PC-3 (cell line): ENCODE measurements at regions of chr6 and their contacts with region 1.

Region 1: DNA sequence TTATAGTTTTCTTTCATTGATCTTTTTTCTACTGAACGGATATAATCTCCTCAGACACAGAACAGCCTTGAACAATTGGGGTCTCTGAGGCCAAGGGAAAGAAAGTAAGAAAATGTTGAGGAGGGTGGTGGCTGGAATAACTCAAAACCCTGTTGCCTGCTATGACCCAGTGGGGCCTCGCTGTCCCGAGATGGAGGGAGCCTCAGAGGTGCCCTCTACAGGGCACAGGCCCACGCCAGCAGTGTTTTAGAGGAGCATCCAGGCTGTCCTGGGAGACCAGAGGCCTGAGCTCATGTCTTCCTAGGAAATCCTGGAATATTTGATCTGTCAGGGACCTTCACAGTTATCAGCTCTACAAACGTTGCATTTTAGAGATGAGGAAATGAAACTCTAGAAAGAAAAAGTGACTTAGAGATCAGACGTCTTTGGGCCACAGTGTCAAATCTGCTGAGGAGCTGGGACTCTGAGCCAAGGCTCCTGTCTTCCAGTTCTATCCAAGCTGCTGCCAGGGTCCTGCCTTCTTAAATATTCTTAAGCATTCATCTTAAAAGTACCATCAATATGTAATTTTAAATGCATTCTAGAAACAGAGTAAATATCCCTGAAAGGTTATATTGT is 26.3 kb downstream of the ALDH5A1 start:
- DNase-seq: peak; percentile 67
- ATAC-seq: peak; percentile 97
- H3K4me3 ChIP-seq: no peak overlapping the region
- H3K27ac ChIP-seq: no peak overlapping the region
- H3K4me1 ChIP-seq: no peaks in the 10 kb centered on the region
- H3K27me3 ChIP-seq: no peaks in the 10 kb centered on the region
- CTCF ChIP-seq: peak; percentile 93

Region 2: GRCh38 chr6:24283043-24283985 is 237.7 kb before region 1 on chr6:
- CTCF ChIA-PET with region 1: no interaction called
- POLR2A ChIA-PET with region 1: no interaction called
- intact Hi-C with region 1: loop called (anchors 10 kb)
- DNase-seq: peak; percentile 84
- ATAC-seq: peak; percentile 99
- H3K4me3 ChIP-seq: peak overlapping the region; percentile 53
- H3K27ac ChIP-seq: no peak overlapping the region
- H3K4me1 ChIP-seq: peaks cover 7% of the 10 kb centered on the region
- H3K27me3 ChIP-seq: peaks cover 22% of the 10 kb centered on the region
- CTCF ChIP-seq: peak; percentile 97

Region 3: DNA sequence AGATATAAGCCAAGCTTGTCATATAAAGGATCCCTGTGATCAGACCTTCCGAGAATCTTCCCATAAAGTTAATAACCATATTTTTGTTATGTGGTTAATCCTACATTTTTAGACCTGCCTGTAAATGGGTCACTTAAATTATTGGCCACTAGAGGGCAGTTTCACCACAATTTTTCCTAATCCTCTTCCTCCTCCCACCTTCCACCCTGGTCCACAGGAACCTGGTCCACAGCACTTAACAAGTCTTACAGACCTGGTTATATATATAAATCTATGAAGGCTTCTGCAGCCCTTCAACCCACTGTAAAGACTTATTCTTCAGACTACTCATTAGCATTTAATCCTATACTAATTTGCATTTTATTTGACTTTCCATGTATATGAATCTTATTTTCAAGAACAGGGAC is 90.0 kb before region 1 on chr6:
- CTCF ChIA-PET with region 1: interaction called, 4 read pairs
- POLR2A ChIA-PET with region 1: no interaction called
- intact Hi-C with region 1: loop called (anchors 1 kb)
- DNase-seq: peak; percentile 74
- ATAC-seq: peak; percentile 27; the same call in 1 of the 2 replicates
- H3K4me3 ChIP-seq: no peak overlapping the region
- H3K27ac ChIP-seq: no peak overlapping the region
- H3K4me1 ChIP-seq: peaks cover 37% of the 10 kb centered on the region
- H3K27me3 ChIP-seq: no peaks in the 10 kb centered on the region
- CTCF ChIP-seq: peak; percentile 89

Region 4: DNA sequence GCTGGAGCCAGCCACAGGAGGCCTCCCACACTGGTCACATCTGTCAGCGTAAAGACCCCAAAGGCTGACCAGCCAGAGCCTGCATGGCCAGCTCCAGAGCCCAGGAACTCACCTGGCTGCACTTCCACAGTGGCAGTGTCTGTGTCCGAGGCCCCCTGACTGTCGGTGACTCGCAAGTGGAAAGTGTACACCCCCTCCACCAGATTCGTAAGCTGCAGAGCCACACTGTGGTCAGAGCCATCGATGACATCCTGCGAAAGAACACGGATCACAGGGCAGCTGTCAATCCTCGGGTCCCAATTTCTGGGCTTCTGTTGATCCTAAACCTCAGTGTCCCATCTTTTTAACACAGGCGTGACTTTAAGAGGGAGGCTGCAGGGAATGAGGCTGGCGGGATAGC is 43.1 kb after region 1 on chr6:
- CTCF ChIA-PET with region 1: no interaction called
- POLR2A ChIA-PET with region 1: no interaction called
- intact Hi-C with region 1: loop called (anchors 5 kb)
- DNase-seq: no peak
- ATAC-seq: no peak; the same call in 1 of the 2 replicates
- H3K4me3 ChIP-seq: no peak overlapping the region
- H3K27ac ChIP-seq: no peak overlapping the region
- H3K4me1 ChIP-seq: peaks cover 4% of the 10 kb centered on the region; the same call in 1 of the 2 replicates
- H3K27me3 ChIP-seq: no peaks in the 10 kb centered on the region
- CTCF ChIP-seq: no peak

Region 5: DNA sequence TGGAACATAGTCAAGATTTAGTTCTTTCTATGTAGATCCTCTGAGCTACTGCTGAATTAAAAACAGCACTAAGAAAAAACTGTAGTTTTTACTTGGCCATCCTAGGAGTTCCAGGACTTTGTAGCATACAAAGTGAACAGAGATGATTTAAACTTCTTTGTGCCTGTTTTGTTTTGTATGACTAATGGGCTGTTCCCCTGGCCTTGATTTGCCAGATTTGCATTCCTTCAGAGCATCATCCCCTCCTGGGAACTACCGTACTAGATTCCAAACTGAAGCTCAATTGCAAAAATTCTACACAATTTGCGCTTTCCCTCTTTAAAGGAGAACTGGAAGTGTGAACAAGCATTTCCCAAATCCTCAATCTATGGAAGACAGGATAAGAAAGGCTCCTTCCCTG is 168.9 kb after region 1 on chr6:
- CTCF ChIA-PET with region 1: no interaction called
- POLR2A ChIA-PET with region 1: no interaction called
- intact Hi-C with region 1: loop called (anchors 1 kb)
- DNase-seq: no peak
- ATAC-seq: no peak
- H3K4me3 ChIP-seq: no peak overlapping the region
- H3K27ac ChIP-seq: no peak overlapping the region
- H3K4me1 ChIP-seq: no peaks in the 10 kb centered on the region
- H3K27me3 ChIP-seq: no peaks in the 10 kb centered on the region
- CTCF ChIP-seq: no peak

Region 6: DNA sequence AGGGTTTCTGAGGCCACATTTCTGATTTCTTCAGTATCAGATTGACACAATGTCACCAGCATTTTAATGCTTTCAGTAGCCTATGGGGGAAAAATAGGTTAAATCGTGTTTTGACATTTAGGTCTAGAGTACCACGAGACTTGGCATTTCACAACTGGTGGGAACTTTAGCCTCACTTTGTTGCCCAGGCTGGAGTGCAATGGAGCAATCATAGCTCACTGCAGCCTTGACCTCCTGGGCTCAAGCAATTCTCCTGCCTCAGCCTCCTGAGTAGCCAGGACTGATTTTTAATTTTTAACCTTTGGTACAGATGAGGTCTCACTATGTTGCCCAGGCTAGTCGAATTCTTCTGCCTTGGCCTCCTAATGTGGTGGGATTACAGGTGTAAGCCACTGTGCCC is 288.7 kb after region 1 on chr6:
- CTCF ChIA-PET with region 1: no interaction called
- POLR2A ChIA-PET with region 1: no interaction called
- intact Hi-C with region 1: no loop called
- DNase-seq: no peak
- ATAC-seq: no peak
- H3K4me3 ChIP-seq: no peak overlapping the region
- H3K27ac ChIP-seq: no peak overlapping the region
- H3K4me1 ChIP-seq: no peaks in the 10 kb centered on the region
- H3K27me3 ChIP-seq: no peaks in the 10 kb centered on the region
- CTCF ChIP-seq: no peak